SK-N-SH (cell line): ENCODE measurements at regions of chr9 and their contacts with region 1.

Region 1: DNA sequence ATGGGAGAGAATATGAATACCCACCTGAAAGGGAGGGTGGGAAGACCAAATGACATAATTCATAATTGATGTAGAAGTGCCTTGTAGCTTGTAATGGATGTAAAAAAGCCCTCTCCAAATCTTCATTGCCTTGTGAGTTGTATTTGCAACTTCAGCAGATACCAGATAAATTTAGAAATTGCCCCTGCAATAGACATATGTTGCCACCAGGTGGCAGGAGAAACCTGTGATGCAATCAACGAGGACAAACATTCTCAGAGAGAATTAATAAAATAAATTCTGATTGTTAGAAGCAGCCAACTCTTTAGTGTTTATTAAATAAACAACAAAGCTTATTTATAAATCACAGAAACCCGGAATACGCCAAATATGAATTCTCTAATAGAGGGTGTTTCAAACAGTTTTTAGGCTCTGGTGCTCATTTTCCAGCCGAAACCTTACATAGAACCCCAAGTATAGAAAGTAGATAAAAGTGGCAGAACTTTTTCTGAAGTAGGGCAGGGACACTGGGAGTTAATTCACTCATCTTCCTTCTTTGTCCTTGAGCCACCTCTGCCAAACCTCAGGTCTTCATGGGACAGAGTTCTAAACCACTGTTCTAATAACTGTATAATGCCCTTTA is 147.8 kb downstream of the TMEM38B start:
- DNase-seq: peak; percentile 48
- H3K4me3 ChIP-seq: no peak overlapping the region; a peak in 1 of 4 replicates
- H3K27ac ChIP-seq: no peak overlapping the region
- H3K4me1 ChIP-seq: no peaks in the 10 kb centered on the region
- H3K27me3 ChIP-seq: no peaks in the 10 kb centered on the region
- CTCF ChIP-seq: peak; percentile 74
- EP300 ChIP-seq: no peak
- RAD21 ChIP-seq: peak; percentile 91

Region 2: DNA sequence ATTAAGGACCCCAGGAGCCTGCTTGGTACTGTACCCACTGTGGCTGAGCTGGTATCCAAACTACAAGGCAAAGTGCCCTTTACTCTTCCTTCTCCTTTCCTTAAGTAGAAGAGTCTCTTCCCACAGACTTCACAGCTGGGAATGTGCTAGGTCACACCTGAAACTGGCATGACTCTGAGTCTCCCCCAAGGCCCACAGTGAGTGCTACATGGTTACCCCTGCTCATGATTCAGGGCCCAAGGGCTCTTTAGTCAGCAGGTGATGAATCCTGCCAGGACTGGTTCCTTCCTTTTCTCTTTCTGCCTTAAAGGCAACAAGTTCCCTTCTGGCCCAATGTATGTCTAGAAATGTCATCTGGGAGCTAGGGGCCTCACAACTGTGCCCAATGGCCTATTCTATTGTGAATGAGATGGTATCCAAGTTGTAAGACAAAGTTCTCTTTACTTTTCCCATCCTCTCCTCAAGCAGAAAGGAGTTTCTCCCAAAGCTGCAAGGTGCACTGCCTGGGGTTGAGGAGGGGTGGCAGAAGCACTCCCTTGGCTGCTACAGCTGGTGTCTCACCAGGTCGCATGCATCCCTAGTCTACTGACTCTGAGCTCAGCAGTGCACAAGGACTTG is 13.4 kb before region 1 on chr9:
- CTCF ChIA-PET with region 1: interaction called, 19 read pairs
- POLR2A ChIA-PET with region 1: no interaction called
- DNase-seq: no peak
- H3K4me3 ChIP-seq: no peak overlapping the region
- H3K27ac ChIP-seq: no peak overlapping the region
- H3K4me1 ChIP-seq: no peaks in the 10 kb centered on the region
- H3K27me3 ChIP-seq: no peaks in the 10 kb centered on the region
- CTCF ChIP-seq: no peak
- EP300 ChIP-seq: no peak
- RAD21 ChIP-seq: no peak

Region 3: DNA sequence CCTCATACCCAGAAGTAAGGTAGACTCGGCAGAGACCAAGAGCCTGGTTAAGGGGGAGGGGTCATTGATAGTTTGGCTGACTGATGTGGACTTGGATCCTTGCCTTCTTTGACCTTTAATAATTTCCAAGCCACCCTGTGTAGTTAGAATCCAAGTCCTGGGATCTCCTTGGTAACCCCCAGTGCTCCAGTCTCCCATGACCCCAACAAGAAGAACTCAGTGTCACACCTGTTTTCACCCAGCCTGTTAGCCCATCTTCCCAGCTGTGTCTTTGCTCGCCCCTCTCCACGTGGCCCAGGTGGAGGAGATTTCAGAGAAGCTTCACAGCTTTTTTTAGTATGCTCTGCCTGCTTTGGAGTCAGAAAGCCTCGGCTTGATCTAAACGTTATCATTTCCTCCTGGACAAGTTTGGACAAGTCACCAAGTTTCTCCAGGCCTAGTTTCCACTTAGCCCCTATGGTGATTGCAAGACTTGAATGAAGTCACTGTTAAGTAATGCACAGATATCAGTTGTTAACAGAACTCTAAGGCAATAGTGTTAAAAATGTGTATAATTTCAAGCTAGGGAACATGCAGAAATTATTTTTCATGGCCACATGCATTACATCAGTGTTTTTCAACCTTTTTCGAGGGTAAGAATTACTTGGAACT is 22.2 kb after region 1 on chr9:
- CTCF ChIA-PET with region 1: interaction called, 15 read pairs
- POLR2A ChIA-PET with region 1: no interaction called
- DNase-seq: no peak
- H3K4me3 ChIP-seq: no peak overlapping the region
- H3K27ac ChIP-seq: no peak overlapping the region
- H3K4me1 ChIP-seq: no peaks in the 10 kb centered on the region
- H3K27me3 ChIP-seq: no peaks in the 10 kb centered on the region
- CTCF ChIP-seq: no peak
- EP300 ChIP-seq: no peak
- RAD21 ChIP-seq: no peak

Region 4: DNA sequence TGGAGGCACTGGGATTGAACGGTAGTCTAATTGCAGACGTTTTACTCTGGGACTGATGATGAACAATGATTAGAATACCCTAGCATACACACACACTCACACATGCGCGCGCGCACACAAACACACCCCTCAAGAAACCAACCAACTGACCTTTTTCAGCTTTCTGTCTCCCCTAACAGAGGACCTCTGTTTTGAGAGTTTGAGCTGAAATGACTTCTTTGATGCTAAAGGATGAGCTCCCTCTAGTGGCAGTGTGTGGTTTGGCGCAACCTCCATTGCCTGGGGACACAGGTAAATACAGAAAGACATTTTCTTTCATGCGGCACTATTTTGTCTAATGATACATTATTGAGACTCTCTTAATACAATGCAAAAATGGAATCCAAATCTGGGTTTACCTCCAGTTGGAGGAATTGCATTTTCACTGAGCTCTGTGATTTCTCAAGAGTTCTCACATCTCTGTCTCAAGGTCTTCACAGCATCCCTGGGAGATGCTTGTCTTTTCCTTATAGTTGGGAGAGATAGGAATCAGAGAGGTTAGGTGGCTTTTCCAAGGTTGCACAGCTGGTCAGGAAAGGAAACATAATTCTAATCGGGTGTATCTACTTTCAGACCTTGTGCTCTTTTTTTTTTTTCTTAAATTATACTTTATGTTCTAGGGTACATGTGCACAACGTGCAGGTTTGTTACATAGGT is 39.7 kb after region 1 on chr9:
- CTCF ChIA-PET with region 1: interaction called, 144 read pairs
- POLR2A ChIA-PET with region 1: interaction called, 3 read pairs
- DNase-seq: peak; percentile 44
- H3K4me3 ChIP-seq: peak overlapping the region in 1 of 2 experiments; percentile 45; a peak in 1 of 4 replicates
- H3K27ac ChIP-seq: no peak overlapping the region
- H3K4me1 ChIP-seq: peaks cover 0 to 5% of the 10 kb centered on the region in 2 experiments; a peak in 1 of 4 replicates
- H3K27me3 ChIP-seq: no peaks in the 10 kb centered on the region
- CTCF ChIP-seq: peak; percentile 90
- EP300 ChIP-seq: no peak
- RAD21 ChIP-seq: peak; percentile 87

Region 5: GRCh38 chr9:105911104-105911911 is 69.2 kb after region 1 on chr9:
- CTCF ChIA-PET with region 1: no interaction called
- POLR2A ChIA-PET with region 1: no interaction called
- DNase-seq: no peak
- H3K4me3 ChIP-seq: no peak overlapping the region
- H3K27ac ChIP-seq: no peak overlapping the region
- H3K4me1 ChIP-seq: no peaks in the 10 kb centered on the region
- H3K27me3 ChIP-seq: no peaks in the 10 kb centered on the region
- CTCF ChIP-seq: no peak
- EP300 ChIP-seq: no peak
- RAD21 ChIP-seq: no peak

Region 6: DNA sequence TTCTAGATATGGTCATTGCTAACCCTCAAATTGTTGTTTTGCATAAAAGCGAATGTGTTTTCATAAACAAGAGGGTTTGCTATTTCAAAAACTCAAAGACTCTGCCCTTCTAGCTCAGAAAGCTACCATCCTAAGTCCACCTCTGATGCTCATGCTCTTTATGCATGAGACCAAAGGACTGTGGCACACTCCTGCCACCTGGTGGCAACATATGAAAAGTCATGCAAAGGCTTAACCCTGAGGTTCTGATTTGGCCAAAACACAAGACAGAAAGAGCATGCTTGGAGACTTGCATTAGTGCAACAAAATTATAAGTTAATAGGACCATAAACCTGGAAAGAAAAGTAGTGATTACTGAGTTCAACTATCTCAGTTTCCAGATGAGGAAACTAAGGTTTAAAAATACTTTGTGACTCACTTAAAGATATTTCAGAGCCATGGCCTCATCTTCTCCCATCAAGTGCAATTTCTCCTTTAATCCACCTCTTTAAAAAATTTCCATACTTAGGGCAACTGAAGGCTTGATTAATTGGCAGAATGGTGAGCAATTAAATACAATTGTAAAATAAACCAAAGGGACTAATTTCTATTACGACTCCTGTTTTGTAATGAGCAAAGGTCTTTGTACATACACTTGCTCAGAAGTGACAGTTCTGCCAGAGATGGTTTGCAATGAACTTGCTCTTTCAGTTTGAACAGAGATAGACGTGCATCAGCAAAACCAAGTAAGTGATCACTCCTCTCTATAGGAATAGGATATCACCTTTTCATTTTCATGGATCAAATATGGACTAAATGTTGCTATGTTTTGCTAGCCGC is 1330.2 kb after region 1 on chr9:
- CTCF ChIA-PET with region 1: interaction called, 43 read pairs
- POLR2A ChIA-PET with region 1: no interaction called
- DNase-seq: peak; percentile 63
- H3K4me3 ChIP-seq: peak overlapping the region in 1 of 2 experiments; percentile 25; a peak in 1 of 4 replicates
- H3K27ac ChIP-seq: no peak overlapping the region
- H3K4me1 ChIP-seq: peaks cover 10 to 13% of the 10 kb centered on the region in 2 experiments; a peak in 2 of 4 replicates
- H3K27me3 ChIP-seq: no peaks in the 10 kb centered on the region
- CTCF ChIP-seq: peak; percentile 91
- EP300 ChIP-seq: no peak
- RAD21 ChIP-seq: peak; percentile 95